ENCODE measurements at regions of chr12 and their contacts with region 1.

Region 1: DNA sequence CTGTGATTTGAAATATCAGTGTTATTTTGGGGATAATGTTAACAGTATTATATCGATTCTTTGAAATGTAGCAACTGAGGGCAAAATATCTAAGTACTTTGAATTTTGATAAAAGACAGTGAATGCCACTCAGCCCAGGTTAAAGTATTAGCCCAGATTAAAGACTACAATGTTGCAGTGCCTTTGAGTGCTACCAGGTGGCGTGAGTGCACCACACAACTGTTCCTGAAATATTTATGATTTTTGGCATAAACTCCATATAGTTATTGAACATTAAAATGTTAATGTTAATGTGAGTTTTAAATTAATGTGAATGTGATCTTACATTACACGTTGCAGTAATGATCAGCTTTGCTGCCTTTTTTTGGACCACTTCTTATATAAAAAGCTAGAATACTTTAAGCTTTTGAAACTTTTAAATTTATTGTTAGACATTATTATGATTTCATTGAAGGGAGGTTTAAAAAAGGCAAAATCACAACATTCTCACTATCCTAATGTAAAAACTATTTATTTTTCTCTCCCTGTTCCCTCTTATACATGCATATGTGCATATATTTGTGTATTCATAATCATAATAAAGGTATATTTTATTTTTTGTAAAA is 22.5 kb downstream of the MRPS35 start:
- DNase-seq: no peak
- H3K4me3 ChIP-seq: no peak overlapping the region
- H3K27ac ChIP-seq: no peak overlapping the region
- H3K4me1 ChIP-seq: no peaks in the 10 kb centered on the region
- H3K27me3 ChIP-seq: no peaks in the 10 kb centered on the region
- CTCF ChIP-seq: peak; percentile 78 to 89 (median 81)

Region 2: GRCh38 chr12:27922501-27923139 is 189.5 kb after region 1 on chr12:
- intact Hi-C with region 1: loop called (anchors 5 kb)
- DNase-seq: peak in 1 of 2 donors; percentile 78
- H3K4me3 ChIP-seq: no peak overlapping the region
- H3K27ac ChIP-seq: peak overlapping the region; percentile 55 to 78
- H3K4me1 ChIP-seq: peaks cover 0 to 14% of the 10 kb centered on the region in 2 donors
- H3K27me3 ChIP-seq: no peaks in the 10 kb centered on the region
- CTCF ChIP-seq: no peak

Region 3: DNA sequence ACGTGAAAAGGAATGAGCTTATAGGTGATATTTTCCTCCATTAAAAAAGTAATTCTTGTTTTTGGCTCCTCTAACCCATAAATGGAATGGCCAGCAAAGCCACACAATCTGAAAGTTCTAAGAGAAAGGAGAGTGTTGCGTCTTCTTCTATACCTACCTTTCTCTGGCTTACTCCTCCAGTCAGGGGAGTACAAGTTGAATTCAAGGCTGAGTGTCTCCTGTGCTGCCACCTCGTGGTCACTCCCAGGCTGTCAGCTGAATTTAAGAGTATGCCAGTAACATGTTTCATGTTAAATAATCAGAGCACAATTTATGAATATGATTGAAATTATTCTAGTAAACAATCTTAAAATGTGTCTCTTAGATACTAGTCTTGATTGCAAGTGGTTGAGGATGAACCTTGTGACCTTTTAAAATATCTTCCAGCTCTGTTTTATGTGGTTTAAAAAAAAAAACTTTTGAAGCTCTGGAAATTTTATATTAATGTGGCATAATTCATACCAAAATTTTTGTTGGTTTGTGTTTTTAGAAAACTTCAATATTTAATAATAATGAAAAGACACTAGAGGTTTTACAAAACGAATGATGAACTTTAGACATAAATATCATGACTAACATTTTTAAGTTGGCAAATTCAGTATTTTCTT is 207.7 kb after region 1 on chr12:
- intact Hi-C with region 1: loop called (anchors 2 kb)
- DNase-seq: peak; percentile 23 to 86
- H3K4me3 ChIP-seq: no peak overlapping the region
- H3K27ac ChIP-seq: no peak overlapping the region
- H3K4me1 ChIP-seq: no peaks in the 10 kb centered on the region
- H3K27me3 ChIP-seq: no peaks in the 10 kb centered on the region
- CTCF ChIP-seq: peak; percentile 61 to 86 (median 68)